Endothelial cell of umbilical vein (primary cell): ENCODE measurements at regions of chr1 and their contacts with region 1.

Region 1: GRCh38 chr1:6438047-6438525 is 13.5 kb downstream of the ESPN start:
- DNase-seq: peak; percentile 57
- H3K4me3 ChIP-seq: no peak overlapping the region
- H3K27ac ChIP-seq: no peak overlapping the region
- H3K4me1 ChIP-seq: no peaks in the 10 kb centered on the region
- H3K27me3 ChIP-seq: peaks cover 0 to 2% of the 10 kb centered on the region in 2 experiments
- CTCF ChIP-seq: peak; percentile 88 to 94
- POLR2A ChIP-seq: no peak

Region 2: GRCh38 chr1:6157528-6158174 is 280.4 kb before region 1 on chr1:
- CTCF ChIA-PET with region 1: no interaction called
- POLR2A ChIA-PET with region 1: no interaction called
- dilution Hi-C with region 1: no loop called
- intact Hi-C with region 1: no loop called
- DNase-seq: no peak
- H3K4me3 ChIP-seq: no peak overlapping the region
- H3K27ac ChIP-seq: no peak overlapping the region
- H3K4me1 ChIP-seq: no peaks in the 10 kb centered on the region
- H3K27me3 ChIP-seq: no peaks in the 10 kb centered on the region
- CTCF ChIP-seq: no peak
- POLR2A ChIP-seq: no peak

Region 3: DNA sequence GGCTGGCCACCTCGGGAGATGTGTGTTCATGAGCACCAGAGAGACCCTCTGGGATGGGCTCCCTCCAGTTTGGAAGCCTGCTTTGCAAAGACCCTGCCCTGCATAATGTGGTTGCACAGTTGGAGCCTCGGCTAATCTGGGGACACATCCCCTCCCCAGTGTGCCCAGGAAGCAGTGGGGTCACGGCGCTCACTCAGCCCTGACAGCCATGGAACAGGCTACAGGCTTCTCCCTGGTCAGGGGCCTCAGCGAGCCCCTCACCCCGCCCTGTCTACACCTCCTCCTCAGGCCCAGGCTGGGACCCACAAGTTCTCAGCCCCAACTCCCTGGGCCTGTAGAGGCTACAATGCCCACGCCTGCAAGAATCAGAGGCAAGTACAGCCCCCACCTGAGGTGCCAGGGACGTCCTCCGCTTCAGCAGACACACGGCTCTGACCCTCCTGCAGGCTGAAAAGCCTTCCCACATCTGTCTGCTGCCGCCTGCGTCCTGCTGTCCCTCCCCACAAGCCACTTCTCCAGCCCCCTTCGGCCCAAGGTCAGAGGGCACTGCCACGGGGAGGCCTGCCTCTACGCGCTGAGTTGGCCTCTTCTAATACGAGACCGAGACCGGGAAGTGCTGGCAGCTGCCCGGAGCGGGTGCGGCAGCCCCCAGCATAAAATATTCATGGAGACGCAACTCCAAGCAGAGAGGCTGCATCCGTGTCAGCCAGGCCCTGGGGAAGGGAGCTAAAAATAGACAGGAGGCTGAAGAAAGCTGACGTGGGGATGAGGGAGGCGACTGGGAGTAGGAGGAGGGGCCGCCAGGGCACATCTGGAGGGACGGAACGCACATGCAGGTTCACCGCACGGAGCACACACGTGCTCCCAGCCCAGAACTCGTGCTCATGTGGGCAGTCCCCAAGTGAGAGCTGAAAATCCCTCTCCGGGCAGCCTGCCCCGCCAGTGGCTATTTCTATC is 162.0 kb before region 1 on chr1:
- CTCF ChIA-PET with region 1: no interaction called
- POLR2A ChIA-PET with region 1: no interaction called
- dilution Hi-C with region 1: no loop called
- intact Hi-C with region 1: no loop called
- DNase-seq: no peak
- H3K4me3 ChIP-seq: no peak overlapping the region
- H3K27ac ChIP-seq: no peak overlapping the region
- H3K4me1 ChIP-seq: no peaks in the 10 kb centered on the region
- H3K27me3 ChIP-seq: no peaks in the 10 kb centered on the region
- CTCF ChIP-seq: no peak
- POLR2A ChIP-seq: no peak

Region 4: DNA sequence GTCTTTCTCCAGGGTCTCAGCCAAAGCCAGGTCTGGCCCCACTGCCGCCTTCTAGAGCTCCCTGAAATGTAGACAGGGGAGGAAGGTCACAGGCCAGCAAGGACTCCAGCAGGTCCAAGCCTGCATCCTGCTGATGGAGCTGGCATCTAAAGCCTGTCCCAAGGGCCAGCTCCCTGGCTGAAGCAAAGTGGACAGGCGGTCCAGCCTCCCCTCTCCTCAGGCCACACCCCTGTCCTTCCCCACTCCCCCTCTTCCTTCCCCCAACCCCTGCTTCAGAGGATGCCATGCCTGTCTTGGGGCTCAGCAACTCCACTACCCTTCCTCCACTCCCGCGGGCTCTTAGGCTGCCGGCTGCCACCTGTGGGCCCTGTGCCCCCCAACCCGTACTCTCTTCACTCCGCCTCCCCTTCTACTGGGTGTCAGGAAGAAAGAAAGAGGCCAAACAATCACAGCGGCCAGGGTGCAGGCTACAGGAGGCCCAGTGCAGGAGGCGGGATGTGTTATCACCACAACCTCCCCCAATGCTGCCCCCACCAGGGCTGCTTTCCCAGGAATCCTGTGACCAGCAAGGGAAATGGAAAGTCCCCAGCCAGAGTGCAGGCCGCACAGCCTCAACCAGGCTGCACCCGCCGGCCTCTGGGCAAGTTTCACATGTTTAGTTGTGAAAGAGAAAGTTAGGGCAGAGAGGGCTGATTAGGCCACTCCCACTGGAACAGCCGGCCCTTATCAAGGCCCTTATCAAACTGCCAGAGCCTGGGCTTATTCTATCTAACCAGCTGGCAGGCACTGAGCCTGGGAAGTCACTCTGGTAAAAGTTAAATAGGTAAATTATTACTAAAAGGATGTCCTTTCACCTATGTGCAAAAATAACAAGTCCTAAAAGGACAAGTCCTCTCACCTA is 78.6 kb before region 1 on chr1:
- CTCF ChIA-PET with region 1: interaction called, 36 read pairs
- POLR2A ChIA-PET with region 1: no interaction called
- dilution Hi-C with region 1: no loop called
- intact Hi-C with region 1: loop called (anchors 1 kb)
- DNase-seq: peak; percentile 88
- H3K4me3 ChIP-seq: no peak overlapping the region
- H3K27ac ChIP-seq: peak overlapping the region; percentile 60
- H3K4me1 ChIP-seq: peaks cover 20% of the 10 kb centered on the region
- H3K27me3 ChIP-seq: no peaks in the 10 kb centered on the region
- CTCF ChIP-seq: peak in 1 of 2 donors; percentile 21
- POLR2A ChIP-seq: no peak

Region 5: GRCh38 chr1:6401673-6402072 is 36.4 kb before region 1 on chr1:
- CTCF ChIA-PET with region 1: interaction called, 73 read pairs
- POLR2A ChIA-PET with region 1: no interaction called
- dilution Hi-C with region 1: no loop called
- intact Hi-C with region 1: loop called (anchors 2 kb)
- DNase-seq: no peak
- H3K4me3 ChIP-seq: no peak overlapping the region
- H3K27ac ChIP-seq: no peak overlapping the region
- H3K4me1 ChIP-seq: no peaks in the 10 kb centered on the region
- H3K27me3 ChIP-seq: no peaks in the 10 kb centered on the region
- CTCF ChIP-seq: no peak
- POLR2A ChIP-seq: no peak

Region 6: DNA sequence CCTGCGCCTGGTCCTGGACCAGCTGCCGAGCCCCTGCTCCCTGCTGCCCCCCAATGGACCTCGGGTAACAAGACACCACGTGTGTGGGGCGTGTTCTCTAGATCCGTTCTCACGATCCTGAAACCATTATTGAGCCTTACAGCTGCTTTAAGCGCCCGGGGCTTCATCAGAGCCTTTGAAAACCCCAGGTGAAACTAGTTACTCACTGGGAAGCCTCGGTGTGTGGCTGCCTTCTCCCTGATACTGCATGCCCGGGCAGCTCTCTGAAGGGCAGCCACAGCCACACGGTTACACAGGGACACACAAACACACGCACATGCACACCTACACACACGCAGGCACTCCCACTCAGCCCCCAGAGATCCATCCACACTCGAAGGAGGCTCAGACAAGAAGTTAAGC is 23.6 kb before region 1 on chr1:
- CTCF ChIA-PET with region 1: interaction called, 202 read pairs
- POLR2A ChIA-PET with region 1: no interaction called
- dilution Hi-C with region 1: no loop called
- intact Hi-C with region 1: no loop called
- DNase-seq: peak; percentile 52
- H3K4me3 ChIP-seq: no peak overlapping the region
- H3K27ac ChIP-seq: no peak overlapping the region
- H3K4me1 ChIP-seq: peaks cover 8% of the 10 kb centered on the region
- H3K27me3 ChIP-seq: peaks cover 4 to 8% of the 10 kb centered on the region in 2 experiments
- CTCF ChIP-seq: peak; percentile 53 to 77
- POLR2A ChIP-seq: no peak

Region 7: GRCh38 chr1:6423321-6423999 is 14.6 kb before region 1 on chr1:
- CTCF ChIA-PET with region 1: interaction called, 202 read pairs
- POLR2A ChIA-PET with region 1: no interaction called
- dilution Hi-C with region 1: no loop called
- intact Hi-C with region 1: loop called (anchors 1 kb)
- DNase-seq: peak; percentile 75
- H3K4me3 ChIP-seq: peak overlapping the region in 1 of 3 experiments; percentile 9
- H3K27ac ChIP-seq: peak overlapping the region; percentile 83
- H3K4me1 ChIP-seq: peaks cover 35% of the 10 kb centered on the region
- H3K27me3 ChIP-seq: peaks cover 0 to 7% of the 10 kb centered on the region in 2 experiments
- CTCF ChIP-seq: peak; percentile 49 to 73
- POLR2A ChIP-seq: peak; percentile 31

Region 8: GRCh38 chr1:6460301-6461050 is 22.4 kb after region 1 on chr1:
- CTCF ChIA-PET with region 1: interaction called, 16 read pairs
- POLR2A ChIA-PET with region 1: no interaction called
- dilution Hi-C with region 1: no loop called
- intact Hi-C with region 1: no loop called
- DNase-seq: no peak
- H3K4me3 ChIP-seq: no peak overlapping the region
- H3K27ac ChIP-seq: no peak overlapping the region
- H3K4me1 ChIP-seq: no peaks in the 10 kb centered on the region
- H3K27me3 ChIP-seq: peaks cover 8 to 10% of the 10 kb centered on the region in 2 experiments
- CTCF ChIP-seq: no peak
- POLR2A ChIP-seq: no peak